Activated CD4-positive, alpha-beta memory T cell treated with anti-CD3 and anti-CD28 coated beads, Interleukin-2, amount 10 ng/mL, durations not matched to agents 7 days and 5 days (primary cell): ENCODE measurements at regions of chr11 and their contacts with region 1.

Region 1: DNA sequence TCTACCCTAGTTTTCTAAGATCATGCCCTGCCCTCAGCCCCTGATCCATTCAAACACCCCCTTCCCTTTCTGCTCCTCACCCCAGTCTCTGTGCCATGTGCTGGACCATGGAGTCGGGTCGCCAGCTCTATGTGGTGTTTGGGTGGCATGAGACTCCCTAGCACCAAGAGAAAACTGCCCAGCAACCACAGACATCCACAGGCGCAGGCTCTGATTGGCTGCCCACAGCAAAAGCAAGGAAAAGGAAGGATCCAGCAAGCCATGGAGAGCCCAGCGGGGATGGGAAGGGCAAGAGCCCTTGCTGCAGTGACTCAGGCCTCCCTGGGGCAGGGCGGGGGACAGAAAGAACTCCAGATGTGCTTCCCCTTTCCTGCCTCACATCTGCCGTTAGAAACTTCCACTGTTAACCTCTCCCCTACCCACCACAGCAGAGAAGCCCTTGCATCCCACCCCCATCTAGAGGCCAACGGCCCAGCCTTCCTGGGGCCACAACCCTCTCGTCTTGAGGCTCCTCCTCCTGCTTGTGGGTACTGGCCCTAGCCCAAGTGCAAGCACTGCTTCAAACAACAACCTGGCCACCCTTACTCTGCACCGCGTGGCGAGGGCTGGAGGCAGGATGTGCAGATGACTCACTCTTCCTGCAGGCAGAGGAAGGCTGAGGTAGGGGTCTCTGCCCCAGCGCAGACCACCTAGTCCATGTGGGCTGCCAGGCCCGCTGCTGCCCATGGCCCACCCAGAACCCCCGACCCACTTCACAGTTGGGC is 9.7 kb upstream of the AHNAK start:
- DNase-seq: peak; percentile 94
- H3K4me3 Mint-ChIP-seq: peak overlapping the region; percentile 74
- H3K27ac Mint-ChIP-seq: peak overlapping the region; percentile 99
- H3K4me1 Mint-ChIP-seq: peaks cover 99% of the 10 kb centered on the region
- H3K27me3 Mint-ChIP-seq: no peaks in the 10 kb centered on the region

Region 2: DNA sequence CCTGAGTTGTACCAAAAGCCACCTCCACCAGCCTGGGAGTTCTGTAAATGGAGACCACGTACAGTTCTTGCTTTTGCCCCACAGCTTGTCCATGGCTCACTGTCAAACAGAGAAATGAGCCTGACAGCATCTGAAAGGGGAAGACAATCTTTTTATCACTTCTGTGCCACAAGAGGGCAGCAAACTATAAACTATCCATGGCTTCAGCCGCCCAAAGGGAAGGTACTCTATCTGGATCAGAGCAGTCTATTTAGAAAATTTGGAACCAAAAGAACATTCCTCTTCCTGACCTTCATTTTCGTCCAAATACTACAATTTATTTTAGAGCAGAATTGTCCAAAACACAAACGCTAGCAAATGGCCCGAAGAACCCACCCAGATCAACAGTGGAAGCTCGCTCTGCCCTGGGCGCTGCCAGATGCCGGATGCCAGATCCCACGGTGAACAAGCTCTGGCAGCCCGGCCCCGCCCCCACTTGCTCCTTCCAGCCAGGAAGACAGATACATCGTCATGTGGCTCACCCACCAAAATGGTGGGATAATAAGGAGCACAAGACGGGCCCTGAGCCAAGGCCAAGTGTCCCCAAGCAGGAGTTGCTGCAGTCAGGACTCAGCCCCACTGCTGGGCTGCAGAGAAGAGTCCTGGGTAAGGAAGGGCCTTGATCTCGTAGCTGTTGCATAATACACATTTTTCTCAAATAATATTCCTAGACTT is 161.3 kb before region 1 on chr11:
- CTCF ChIA-PET with region 1: interaction called, 65 read pairs
- POLR2A ChIA-PET with region 1: interaction called, 6 read pairs
- DNase-seq: peak; percentile 56
- H3K4me3 Mint-ChIP-seq: no peak overlapping the region
- H3K27ac Mint-ChIP-seq: no peak overlapping the region
- H3K4me1 Mint-ChIP-seq: peaks cover 4% of the 10 kb centered on the region
- H3K27me3 Mint-ChIP-seq: peaks cover 15% of the 10 kb centered on the region

Region 3: GRCh38 chr11:62514151-62514550 is 42.1 kb before region 1 on chr11:
- CTCF ChIA-PET with region 1: no interaction called
- POLR2A ChIA-PET with region 1: no interaction called
- DNase-seq: no peak
- H3K4me3 Mint-ChIP-seq: no peak overlapping the region
- H3K27ac Mint-ChIP-seq: no peak overlapping the region
- H3K4me1 Mint-ChIP-seq: peaks cover 3% of the 10 kb centered on the region
- H3K27me3 Mint-ChIP-seq: no peaks in the 10 kb centered on the region

Region 4: DNA sequence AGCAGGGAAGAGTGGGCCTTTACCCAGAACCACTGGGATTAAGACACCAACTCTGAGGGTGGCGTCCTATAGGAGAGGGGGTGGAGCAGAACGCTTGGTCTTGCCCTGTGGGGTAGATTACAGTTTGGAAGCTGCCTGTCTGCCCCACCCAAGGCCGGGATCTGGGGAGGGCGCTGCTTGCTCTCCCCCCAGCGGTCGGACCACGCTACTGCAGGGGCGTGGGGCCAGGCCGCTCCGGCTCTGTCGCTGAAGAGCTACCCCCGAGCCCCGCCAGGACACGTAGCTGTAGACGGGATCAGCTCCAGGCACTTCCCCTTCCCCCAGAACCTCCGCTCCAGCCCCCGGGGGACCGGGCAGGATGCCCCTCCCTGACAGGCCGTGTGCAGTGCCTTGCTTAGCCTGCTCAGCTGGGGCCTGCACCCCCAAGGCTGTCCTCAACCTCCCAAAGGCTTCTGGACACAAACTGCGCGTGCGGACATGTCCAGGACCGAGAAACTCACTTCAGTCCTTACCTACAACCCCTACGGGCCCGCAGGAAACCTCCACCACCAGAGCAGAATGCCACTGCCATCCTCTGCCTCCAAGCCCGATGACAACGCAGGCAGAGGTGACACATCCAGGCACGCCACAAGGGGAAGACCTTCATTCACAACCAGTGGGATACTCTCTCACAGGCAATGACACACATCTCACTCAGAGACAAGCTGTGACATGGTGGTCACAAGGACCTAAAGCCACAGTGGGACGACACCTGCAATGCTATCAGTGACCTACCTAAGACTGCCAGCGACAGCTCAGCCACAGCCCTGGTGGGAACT is 13.3 kb before region 1 on chr11:
- CTCF ChIA-PET with region 1: interaction called, 268 read pairs
- POLR2A ChIA-PET with region 1: interaction called, 364 read pairs
- DNase-seq: peak; percentile 80
- H3K4me3 Mint-ChIP-seq: peak overlapping the region; percentile 100
- H3K27ac Mint-ChIP-seq: peak overlapping the region; percentile 93
- H3K4me1 Mint-ChIP-seq: peaks cover 76% of the 10 kb centered on the region
- H3K27me3 Mint-ChIP-seq: peaks cover 4% of the 10 kb centered on the region

Region 5: GRCh38 chr11:62573592-62574362 is 17.5 kb after region 1 on chr11 and contains the start of gene EEF1G:
- CTCF ChIA-PET with region 1: interaction called, 20 read pairs
- POLR2A ChIA-PET with region 1: interaction called, 130 read pairs
- DNase-seq: peak; percentile 99
- H3K4me3 Mint-ChIP-seq: peak within 1 kb of the TSS; percentile 94
- H3K27ac Mint-ChIP-seq: peak within 1 kb of the TSS; percentile 91
- H3K4me1 Mint-ChIP-seq: peaks cover 58% of the 10 kb centered on the region
- H3K27me3 Mint-ChIP-seq: no peaks in the 10 kb centered on the region
- total RNA-seq, gene EEF1G: 991 to 999 TPM

Region 6: GRCh38 chr11:62621567-62622470 is 65.5 kb after region 1 on chr11 and contains the start of gene B3GAT3:
- CTCF ChIA-PET with region 1: no interaction called
- POLR2A ChIA-PET with region 1: interaction called, 11 read pairs
- DNase-seq: peak; percentile 97
- H3K4me3 Mint-ChIP-seq: peak within 1 kb of the TSS; percentile 87
- H3K27ac Mint-ChIP-seq: peak within 1 kb of the TSS; percentile 98
- H3K4me1 Mint-ChIP-seq: peaks cover 29% of the 10 kb centered on the region
- H3K27me3 Mint-ChIP-seq: no peaks in the 10 kb centered on the region
- total RNA-seq, gene B3GAT3: 58.9 to 67.1 TPM